Aorta (tissue), 5 donors: ENCODE measurements at regions of chr1 and their contacts with region 1.

Region 1: DNA sequence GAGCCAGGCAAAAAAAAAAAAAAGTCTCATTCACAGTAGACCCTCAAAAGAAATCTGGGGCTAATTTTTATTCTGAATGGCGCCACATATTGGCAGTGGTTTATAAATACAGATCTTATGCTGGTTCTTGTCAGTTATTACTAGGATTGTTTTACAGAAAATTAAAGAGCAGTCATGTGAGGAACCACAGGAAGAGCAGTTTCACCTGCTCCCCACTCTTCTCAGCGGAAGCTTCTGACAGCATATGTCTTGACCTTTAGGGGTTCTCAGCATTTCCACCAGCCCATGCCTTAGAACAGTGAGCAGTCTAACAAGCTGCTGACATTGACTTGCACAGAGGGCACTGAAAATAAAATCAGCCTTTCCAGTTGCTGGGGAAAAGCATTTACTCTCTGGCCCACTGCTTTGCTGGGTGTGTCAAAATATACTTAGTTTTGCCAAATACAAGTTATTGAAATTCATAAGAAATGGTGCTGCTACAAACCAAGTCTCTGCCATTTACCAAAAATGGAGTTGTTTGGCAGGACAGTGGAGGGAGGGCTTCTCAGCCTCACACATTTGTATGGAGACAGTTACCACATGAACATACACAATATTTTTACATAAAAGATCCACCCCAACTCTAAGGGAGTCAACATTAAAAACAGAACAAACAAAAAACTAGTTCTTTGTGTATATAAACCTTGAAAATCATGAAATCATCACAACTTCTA is 144.2 kb downstream of the SYT2 start:
- DNase-seq: no peak
- ATAC-seq: peak; percentile 34
- H3K4me3 ChIP-seq: no peak overlapping the region
- H3K27ac ChIP-seq: peak overlapping the region in 1 of 2 donors; percentile 88
- H3K4me1 ChIP-seq: peaks cover 13 to 31% of the 10 kb centered on the region in 2 donors
- H3K27me3 ChIP-seq: no peaks in the 10 kb centered on the region

Region 2: GRCh38 chr1:202452493-202452892 is 113.6 kb before region 1 on chr1:
- intact Hi-C with region 1: no loop called
- DNase-seq: no peak
- ATAC-seq: no peak
- H3K4me3 ChIP-seq: no peak overlapping the region
- H3K27ac ChIP-seq: no peak overlapping the region
- H3K4me1 ChIP-seq: no peaks in the 10 kb centered on the region
- H3K27me3 ChIP-seq: no peaks in the 10 kb centered on the region

Region 3: DNA sequence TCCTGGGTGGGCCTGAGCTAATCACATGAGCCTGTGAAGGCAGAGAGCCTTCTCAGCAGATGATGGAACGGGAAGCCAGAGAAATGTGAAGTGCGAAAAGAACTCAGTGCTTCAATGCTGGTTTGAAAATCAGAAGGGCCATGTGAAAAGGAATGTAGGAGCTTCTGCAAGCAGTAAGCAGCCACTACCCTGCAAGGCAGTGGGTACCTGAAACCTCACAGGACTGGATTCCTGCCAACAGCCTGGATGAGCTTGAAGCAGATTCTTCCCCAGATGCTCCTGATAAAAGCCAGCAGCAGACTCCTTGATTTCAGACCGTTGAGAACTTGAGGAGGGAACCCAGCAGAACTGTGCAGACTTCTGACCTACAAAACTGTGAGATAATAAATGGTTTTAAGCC is 14.4 kb before region 1 on chr1:
- intact Hi-C with region 1: loop called in 1 of 2 experiments (anchors 2 kb)
- DNase-seq: no peak
- ATAC-seq: no peak
- H3K4me3 ChIP-seq: no peak overlapping the region
- H3K27ac ChIP-seq: peak overlapping the region in 1 of 2 donors; percentile 88
- H3K4me1 ChIP-seq: peaks cover 0 to 2% of the 10 kb centered on the region in 2 donors
- H3K27me3 ChIP-seq: no peaks in the 10 kb centered on the region